A549 (cell line): ENCODE measurements at regions of chr19 and their contacts with region 1.

Region 1: DNA sequence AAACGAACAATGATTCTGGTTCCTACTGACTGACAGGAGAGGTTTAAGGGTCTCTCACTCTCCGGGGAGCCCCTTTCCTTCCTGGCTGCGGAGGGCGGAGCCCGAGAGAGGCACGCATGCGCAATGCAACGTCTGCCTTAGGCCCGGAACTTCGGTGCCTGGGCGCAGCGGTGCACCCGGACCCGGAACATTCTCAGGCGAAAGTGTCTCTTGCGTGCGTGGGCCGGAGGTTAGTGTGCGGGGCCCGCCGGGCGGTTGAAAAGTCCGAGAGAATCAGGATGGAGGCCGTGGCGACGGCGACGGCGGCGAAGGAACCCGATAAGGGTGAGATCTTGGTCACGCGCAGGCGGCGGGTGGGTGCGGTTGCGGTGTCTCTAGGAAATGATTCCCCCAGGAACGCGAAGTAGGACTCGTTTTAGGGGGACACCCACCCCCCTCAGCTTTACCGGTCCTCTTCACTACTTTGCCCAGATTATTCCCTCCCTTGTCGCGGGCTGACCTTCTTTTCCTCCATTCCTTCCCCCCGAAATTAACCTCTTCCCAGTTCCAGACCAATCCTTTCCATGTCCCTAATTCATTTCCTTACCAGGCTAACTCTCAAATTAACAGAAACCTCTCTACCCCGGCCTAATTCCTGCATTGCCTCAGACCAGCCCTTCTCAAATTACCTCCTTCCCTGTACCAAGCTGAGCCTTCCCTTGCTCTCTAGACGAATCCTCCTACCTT is at the start of gene CCDC97:
- DNase-seq: peak; percentile 94 to 99
- ATAC-seq: peak; percentile 60 to 78
- H3K4me3 ChIP-seq: peak within 1 kb of the TSS; percentile 57
- H3K27ac ChIP-seq: peak within 1 kb of the TSS; percentile 91 to 92
- H3K4me1 ChIP-seq: peaks cover 24% of the 10 kb centered on the region
- CTCF ChIP-seq: no peak
- EP300 ChIP-seq: peak in 1 of 2 experiments; percentile 58; a peak in 1 of 5 replicates
- POLR2A ChIP-seq: no peak; the same call in none of the 2 replicates
- RAD21 ChIP-seq: peak; percentile 19 to 50
- polyA plus RNA-seq, gene CCDC97: 18.7 and 21.4 TPM in 2 replicates

Region 2: DNA sequence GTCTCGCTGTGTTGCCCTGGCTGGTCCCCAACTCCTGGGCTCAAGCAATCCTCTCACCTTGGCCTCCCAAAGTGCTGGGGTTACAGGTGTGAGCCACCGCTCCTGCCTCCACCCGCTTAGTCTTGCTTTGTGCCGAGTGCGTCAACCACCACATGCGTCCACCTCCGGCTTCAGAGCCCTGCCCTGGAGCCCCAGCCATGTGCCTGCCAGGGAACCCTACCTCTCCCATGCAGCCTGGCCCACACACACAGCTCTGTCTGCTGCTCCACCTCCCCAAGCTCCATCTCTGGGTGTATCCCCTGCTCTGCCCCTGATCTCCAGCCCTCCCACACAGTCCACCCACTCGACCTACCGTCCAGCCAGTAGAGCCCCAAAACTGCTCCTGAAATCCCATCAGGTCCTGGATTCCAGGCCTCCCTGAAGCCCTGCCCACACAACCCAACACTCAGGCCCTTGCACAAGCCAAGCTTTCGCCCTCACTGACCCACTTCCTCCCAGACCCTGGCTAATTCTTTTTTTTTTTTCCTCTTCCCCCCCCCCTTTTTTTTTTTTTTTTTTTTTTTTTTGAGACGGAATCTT is 186.4 kb before region 1 on chr19:
- CTCF ChIA-PET with region 1: interaction called, 25 read pairs
- POLR2A ChIA-PET with region 1: no interaction called
- DNase-seq: no peak
- ATAC-seq: no peak
- H3K4me3 ChIP-seq: no peak overlapping the region
- H3K27ac ChIP-seq: no peak overlapping the region
- H3K4me1 ChIP-seq: peaks cover 10% of the 10 kb centered on the region
- CTCF ChIP-seq: no peak
- EP300 ChIP-seq: no peak
- POLR2A ChIP-seq: no peak
- RAD21 ChIP-seq: no peak

Region 3: GRCh38 chr19:41198559-41198958 is 111.6 kb before region 1 on chr19:
- CTCF ChIA-PET with region 1: interaction called, 280 read pairs
- POLR2A ChIA-PET with region 1: interaction called, 3 read pairs
- DNase-seq: no peak
- ATAC-seq: no peak
- H3K4me3 ChIP-seq: no peak overlapping the region
- H3K27ac ChIP-seq: no peak overlapping the region
- H3K4me1 ChIP-seq: peaks cover 8% of the 10 kb centered on the region
- CTCF ChIP-seq: no peak
- EP300 ChIP-seq: no peak
- POLR2A ChIP-seq: no peak
- RAD21 ChIP-seq: no peak

Region 4: GRCh38 chr19:41226053-41226873 is 83.9 kb before region 1 on chr19:
- CTCF ChIA-PET with region 1: interaction called, 38 read pairs
- POLR2A ChIA-PET with region 1: interaction called, 5 read pairs
- DNase-seq: peak; percentile 95 to 97
- ATAC-seq: peak; percentile 73 to 77
- H3K4me3 ChIP-seq: peak overlapping the region; percentile 41
- H3K27ac ChIP-seq: peak overlapping the region; percentile 91 to 95
- H3K4me1 ChIP-seq: peaks cover 64% of the 10 kb centered on the region
- CTCF ChIP-seq: no peak
- EP300 ChIP-seq: peak; percentile 72 to 93; a peak in 3 of 5 replicates
- POLR2A ChIP-seq: no peak; the same call in 1 of the 2 replicates
- RAD21 ChIP-seq: peak in 1 of 2 experiments; percentile 36; a peak in 3 of 5 replicates

Region 5: GRCh38 chr19:41298348-41298964 is 11.7 kb before region 1 on chr19:
- CTCF ChIA-PET with region 1: interaction called, 598 read pairs
- POLR2A ChIA-PET with region 1: interaction called, 3 read pairs
- DNase-seq: no peak
- ATAC-seq: peak; percentile 28 to 54; a peak in 4 of 6 replicates
- H3K4me3 ChIP-seq: no peak overlapping the region
- H3K27ac ChIP-seq: no peak overlapping the region
- H3K4me1 ChIP-seq: no peaks in the 10 kb centered on the region
- CTCF ChIP-seq: no peak
- EP300 ChIP-seq: no peak
- POLR2A ChIP-seq: no peak
- RAD21 ChIP-seq: no peak

Region 6: DNA sequence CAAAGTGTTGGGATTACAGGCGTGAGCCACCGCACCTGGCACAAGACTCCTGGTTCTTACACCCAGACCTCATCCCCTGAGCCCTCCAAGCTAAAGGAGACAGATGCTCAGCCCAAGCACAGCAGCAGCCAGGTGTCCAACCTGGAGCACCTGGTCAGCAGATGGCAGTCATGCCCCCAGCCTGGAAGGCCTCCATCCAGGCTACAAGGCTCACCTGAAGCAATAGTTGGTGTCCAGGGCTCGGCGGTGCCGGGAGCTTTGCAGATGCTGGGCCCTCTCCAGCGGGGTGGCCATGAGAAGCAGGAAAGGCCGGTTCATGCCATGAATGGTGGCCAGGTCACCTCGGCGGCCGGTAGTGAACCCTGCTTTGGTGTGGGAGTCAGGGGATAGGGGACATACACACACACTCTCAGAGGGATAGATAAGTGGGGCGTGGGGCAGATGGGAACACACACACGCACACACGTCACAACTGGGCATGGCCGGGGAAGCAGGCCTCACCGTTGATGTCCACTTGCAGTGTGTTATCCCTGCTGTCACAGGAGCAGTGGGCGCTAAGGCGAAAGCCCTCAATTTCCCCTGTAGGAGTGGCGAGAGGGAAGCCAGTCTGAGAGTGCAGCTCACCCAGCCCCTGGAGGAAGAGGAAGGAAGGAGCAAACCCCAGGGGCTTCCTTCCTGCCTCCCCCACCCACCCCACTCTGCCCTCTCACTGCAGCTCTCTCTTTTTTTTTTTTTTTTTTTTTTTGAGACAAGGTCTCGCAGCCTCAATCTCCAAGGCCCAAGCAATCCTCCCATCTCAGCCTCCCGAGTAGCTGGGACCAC is 31.7 kb after region 1 on chr19:
- CTCF ChIA-PET with region 1: interaction called, 295 read pairs
- POLR2A ChIA-PET with region 1: no interaction called
- DNase-seq: no peak
- ATAC-seq: peak; percentile 12 to 27; a peak in 3 of 6 replicates
- H3K4me3 ChIP-seq: no peak overlapping the region
- H3K27ac ChIP-seq: no peak overlapping the region
- H3K4me1 ChIP-seq: peaks cover 9% of the 10 kb centered on the region
- CTCF ChIP-seq: no peak
- EP300 ChIP-seq: no peak
- POLR2A ChIP-seq: no peak
- RAD21 ChIP-seq: peak in 1 of 2 experiments; percentile 8; a peak in 1 of 5 replicates

Region 7: DNA sequence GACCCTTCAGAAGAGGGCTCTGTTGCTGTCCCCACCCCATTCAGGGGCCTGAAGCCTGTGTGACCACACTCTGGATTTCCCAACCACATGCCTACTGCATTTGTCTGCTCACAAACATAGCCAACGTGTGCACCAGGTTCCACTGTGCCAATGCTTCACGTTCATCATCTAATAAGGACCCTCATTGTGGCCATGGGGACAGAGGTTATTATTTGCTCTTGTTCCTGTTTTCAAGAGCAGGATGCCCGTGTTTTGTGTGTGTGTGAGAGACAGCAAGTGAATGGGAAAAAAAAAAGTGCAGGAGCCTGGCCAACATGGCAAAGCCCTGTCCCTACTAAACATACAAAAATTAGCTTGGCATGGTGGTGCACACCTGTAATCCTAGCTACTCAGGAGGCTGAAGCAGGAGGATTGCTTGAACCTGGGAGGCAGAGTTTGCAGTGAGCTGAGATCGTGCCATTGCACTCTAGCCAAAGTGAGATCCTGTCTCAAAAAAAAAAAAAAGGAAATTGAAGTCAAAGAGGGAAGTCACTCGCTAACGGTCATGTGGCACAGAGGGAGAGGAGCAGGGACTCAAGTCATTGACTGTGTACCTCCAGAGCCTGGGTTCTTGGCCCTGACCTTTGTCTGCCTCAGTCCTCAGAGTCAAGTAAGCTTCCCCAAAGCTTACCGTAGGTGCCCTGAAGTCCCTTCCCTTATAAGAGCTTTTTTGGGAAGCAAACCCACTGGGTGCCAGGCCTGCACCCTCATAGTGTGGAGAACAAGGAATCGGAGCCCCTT is 110.1 kb after region 1 on chr19:
- CTCF ChIA-PET with region 1: no interaction called
- POLR2A ChIA-PET with region 1: no interaction called
- DNase-seq: no peak
- ATAC-seq: no peak
- H3K4me3 ChIP-seq: no peak overlapping the region
- H3K27ac ChIP-seq: no peak overlapping the region
- H3K4me1 ChIP-seq: no peaks in the 10 kb centered on the region
- CTCF ChIP-seq: no peak
- EP300 ChIP-seq: no peak
- POLR2A ChIP-seq: no peak
- RAD21 ChIP-seq: no peak

Region 8: GRCh38 chr19:41439441-41440222 is 129.4 kb after region 1 on chr19 and contains the start of gene DMAC2:
- CTCF ChIA-PET with region 1: interaction called, 18 read pairs
- POLR2A ChIA-PET with region 1: interaction called, 3 read pairs
- DNase-seq: peak; percentile 100
- ATAC-seq: peak; percentile 96 to 99
- H3K4me3 ChIP-seq: peak within 1 kb of the TSS; percentile 52
- H3K27ac ChIP-seq: peak within 1 kb of the TSS; percentile 81 to 86
- H3K4me1 ChIP-seq: peaks cover 13% of the 10 kb centered on the region; the same call in 2 of the 3 replicates
- CTCF ChIP-seq: peak; percentile 85
- EP300 ChIP-seq: no peak; a peak in 1 of 5 replicates
- POLR2A ChIP-seq: peak; percentile 80
- RAD21 ChIP-seq: peak; percentile 38 to 51; a peak in 2 of 5 replicates
- polyA plus RNA-seq, gene DMAC2: 128 and 132 TPM in 2 replicates